ENCODE measurements at regions of chr5 and their contacts with region 1.

Region 1: GRCh38 chr5:102845041-102845440 is 89.9 kb downstream of the PAM start:
- DNase-seq: no peak
- ATAC-seq: no peak
- H3K4me3 ChIP-seq: no peak overlapping the region
- H3K27ac ChIP-seq: no peak overlapping the region
- H3K4me1 ChIP-seq: no peaks in the 10 kb centered on the region
- H3K27me3 ChIP-seq: no peaks in the 10 kb centered on the region
- CTCF ChIP-seq: no peak
- EP300 ChIP-seq: no peak
- POLR2A ChIP-seq: no peak
- RAD21 ChIP-seq: no peak

Region 2: DNA sequence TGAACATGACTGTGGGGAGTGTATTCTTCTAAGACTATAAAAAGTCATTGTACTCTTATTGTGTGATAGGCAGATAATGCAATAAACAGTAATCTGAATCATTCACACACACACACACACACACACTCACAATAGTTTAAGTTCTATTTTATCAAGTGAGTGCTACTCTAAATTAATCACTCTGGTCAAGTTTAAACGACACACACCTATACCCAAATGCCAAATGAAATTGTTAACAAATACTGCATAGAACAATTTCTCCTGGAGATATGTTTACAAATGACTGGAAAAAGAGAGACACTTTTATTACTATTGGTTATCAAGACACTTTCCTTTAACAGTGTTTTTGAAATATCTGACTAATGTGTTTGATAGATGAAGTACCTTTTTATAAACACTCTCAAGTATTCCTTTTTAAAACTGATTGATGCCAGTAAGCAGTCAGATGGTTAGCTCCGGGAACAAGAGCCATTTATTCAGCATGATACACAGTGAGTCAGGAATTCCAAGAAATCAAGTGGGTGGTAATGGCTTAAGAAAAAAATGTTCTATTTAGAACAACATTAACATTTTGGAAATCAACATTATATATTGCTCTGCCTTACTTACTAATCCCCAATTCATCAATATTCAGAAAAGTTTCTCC is 1420.4 kb before region 1 on chr5:
- CTCF ChIA-PET with region 1: no interaction called
- POLR2A ChIA-PET with region 1: no interaction called
- in situ Hi-C with region 1: loop called (anchors 10 kb)
- intact Hi-C with region 1: no loop called
- DNase-seq: no peak
- ATAC-seq: no peak
- H3K4me3 ChIP-seq: no peak overlapping the region
- H3K27ac ChIP-seq: no peak overlapping the region
- H3K4me1 ChIP-seq: no peaks in the 10 kb centered on the region
- H3K27me3 ChIP-seq: no peaks in the 10 kb centered on the region
- CTCF ChIP-seq: no peak
- EP300 ChIP-seq: no peak
- POLR2A ChIP-seq: no peak
- RAD21 ChIP-seq: no peak

Measured in K562 (cell line).